HEK293 (cell line): ENCODE measurements at regions of chr9 and their contacts with region 1.

Region 1: GRCh38 chr9:97501177-97501971 is at the start of gene TMOD1:
- H3K4me3 ChIP-seq: peak within 1 kb of the TSS; percentile 71
- H3K27ac ChIP-seq: peak within 1 kb of the TSS; percentile 63; the same call in 1 of the 2 replicates
- H3K4me1 ChIP-seq: peaks cover 3% of the 10 kb centered on the region; the same call in 1 of the 2 replicates
- CTCF ChIP-seq: 0 out of 2 replicates have a peak, but pooled peaks have one; percentile 21

Region 2: DNA sequence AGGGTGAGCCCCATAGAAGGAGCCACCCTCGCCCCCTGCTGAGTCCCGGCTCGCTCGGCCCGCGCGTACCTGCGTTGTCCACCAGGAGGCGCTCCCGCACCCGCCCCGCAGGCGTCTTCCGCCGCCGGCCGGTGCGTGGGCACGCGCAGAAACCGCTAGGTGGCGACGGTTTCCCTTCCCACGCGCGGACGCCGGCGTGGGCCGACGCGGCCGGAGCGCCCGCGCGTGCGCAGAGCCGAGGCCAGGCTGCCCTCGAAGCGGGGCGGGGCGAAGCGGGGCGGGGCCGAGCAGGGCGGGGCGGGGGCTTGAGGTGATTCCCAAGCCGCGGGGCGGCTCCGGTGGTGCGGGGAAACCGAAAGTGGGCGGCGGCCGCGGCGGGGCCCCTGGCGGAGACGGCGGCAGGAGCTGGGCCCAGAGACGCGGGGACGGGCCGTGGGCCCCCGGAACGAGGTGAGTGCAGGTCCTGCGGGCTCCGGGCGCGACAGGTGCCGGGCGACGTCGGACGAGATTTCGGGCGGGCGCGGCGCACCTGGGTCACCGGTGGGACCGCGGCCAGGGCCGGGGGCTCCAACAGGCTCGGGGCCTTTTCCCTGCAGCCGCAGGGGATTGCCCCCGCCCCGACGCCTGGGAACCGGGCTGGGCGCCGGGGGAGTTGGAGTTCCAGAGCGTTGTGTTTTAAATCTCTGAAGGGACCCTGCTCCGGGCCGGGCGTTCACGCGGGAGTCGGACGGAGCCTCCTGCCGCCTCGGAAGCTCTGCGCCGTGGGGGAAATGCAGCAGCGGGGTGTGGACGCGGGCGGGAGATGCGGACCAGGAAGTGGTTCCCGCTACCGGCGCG is 89.4 kb before region 1 on chr9 and contains the start of gene TDRD7:
- CTCF ChIA-PET with region 1: interaction called, 14 read pairs
- POLR2A ChIA-PET with region 1: interaction called, 3 read pairs
- H3K4me3 ChIP-seq: peak within 1 kb of the TSS; percentile 81
- H3K27ac ChIP-seq: peak within 1 kb of the TSS; percentile 53; the same call in 1 of the 2 replicates
- H3K4me1 ChIP-seq: no peaks in the 10 kb centered on the region
- CTCF ChIP-seq: peak; percentile 79

Region 3: DNA sequence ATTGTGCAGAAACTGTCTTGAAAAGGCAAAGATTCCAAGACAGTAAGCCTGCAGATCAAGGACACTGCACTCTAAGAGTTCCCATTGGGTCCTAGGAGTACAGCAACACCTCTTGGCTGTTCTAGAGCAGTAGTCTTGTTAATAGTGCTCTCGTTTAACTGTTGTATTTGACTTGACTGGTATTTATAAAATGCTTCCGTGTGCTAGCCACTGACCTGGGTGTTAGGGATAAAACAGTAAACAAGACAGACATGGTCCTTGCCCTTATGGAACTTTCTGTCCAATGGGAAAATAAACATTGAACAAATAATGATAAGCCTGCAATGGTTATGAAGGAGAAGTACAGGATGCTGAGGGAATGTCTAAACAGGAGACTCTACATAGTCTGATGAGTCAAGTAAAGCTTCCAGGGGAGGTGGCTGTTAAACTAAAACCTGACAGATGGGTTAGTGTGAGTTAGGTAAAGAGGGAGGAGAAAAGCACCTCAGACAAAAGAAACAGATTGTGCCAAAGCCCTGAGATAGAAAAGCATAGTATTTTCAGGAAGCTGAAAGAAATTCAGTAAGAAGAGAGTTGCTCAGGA is 56.2 kb before region 1 on chr9:
- CTCF ChIA-PET with region 1: no interaction called
- POLR2A ChIA-PET with region 1: no interaction called
- H3K4me3 ChIP-seq: no peak overlapping the region
- H3K27ac ChIP-seq: no peak overlapping the region
- H3K4me1 ChIP-seq: no peaks in the 10 kb centered on the region
- CTCF ChIP-seq: no peak

Region 4: DNA sequence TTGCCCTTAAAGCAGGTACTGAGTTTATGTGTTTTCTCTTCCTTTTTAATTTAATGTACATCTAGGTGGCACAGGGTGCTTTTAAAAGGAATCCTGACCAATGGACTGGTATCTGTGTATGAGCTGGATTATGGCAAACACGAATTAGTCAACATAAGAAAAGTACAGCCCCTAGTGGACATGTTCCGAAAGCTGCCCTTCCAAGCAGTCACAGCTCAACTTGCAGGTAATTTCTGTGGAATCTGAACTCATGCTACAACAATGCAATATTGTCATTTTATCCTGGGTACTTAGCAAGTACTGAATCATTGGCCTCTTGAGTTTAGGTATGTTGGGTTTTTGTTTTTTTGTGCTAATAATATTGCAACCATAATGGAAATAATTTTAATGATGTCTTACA is 14.3 kb before region 1 on chr9:
- CTCF ChIA-PET with region 1: interaction called, 15 read pairs
- POLR2A ChIA-PET with region 1: interaction called, 4 read pairs
- H3K4me3 ChIP-seq: no peak overlapping the region
- H3K27ac ChIP-seq: no peak overlapping the region
- H3K4me1 ChIP-seq: no peaks in the 10 kb centered on the region
- CTCF ChIP-seq: no peak

Region 5: DNA sequence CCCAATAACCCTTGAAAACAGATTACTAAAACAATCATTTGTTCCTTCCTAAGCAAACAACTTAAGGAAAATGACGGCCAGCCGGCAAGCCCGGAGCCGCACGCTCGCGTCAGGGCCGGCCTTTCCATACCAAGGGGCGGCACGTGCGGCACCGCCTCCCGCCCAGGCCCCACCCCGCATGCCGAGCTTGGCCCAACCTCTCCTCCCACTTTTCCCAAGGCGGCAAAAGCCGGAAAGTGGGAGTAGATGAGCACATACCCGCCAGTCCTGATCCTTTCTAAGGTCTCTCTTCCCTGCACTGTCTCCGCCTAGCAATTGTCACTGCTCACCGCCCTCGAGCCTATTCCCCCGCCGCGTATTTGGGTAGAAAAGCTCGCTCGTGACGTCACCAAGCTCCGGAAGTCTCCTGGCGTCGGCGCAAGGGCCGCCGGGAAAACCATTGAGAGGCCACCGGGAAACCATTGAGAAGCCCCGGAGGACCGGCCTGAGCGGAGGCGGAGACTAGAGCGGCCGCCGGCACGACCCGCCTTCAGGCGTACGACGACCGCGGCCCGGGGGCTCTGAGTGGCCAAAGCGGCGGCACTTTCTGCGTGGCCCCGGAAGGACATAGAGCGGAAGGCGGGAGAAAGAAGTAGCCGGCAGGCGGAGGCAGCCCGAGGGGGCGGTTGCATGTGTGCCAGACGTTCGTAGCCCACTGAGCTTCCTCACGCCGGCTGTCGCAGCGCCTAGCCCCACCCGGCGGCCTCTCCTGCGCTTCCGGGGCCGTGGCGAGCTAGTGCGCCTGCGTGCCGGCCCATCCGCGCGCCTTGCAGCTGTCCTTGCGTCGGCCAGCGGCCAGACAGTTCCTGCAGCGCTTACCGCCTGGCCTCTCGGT is 131.8 kb after region 1 on chr9 and contains the starts of genes NCBP1 and TSTD2:
- CTCF ChIA-PET with region 1: no interaction called
- POLR2A ChIA-PET with region 1: interaction called, 11 read pairs
- H3K4me3 ChIP-seq: peak within 1 kb of the TSS; percentile 97
- H3K27ac ChIP-seq: peak within 1 kb of the TSS; percentile 92
- H3K4me1 ChIP-seq: no peaks in the 10 kb centered on the region; the same call in 1 of the 2 replicates
- CTCF ChIP-seq: no peak; the same call in 1 of the 2 replicates